ENCODE measurements at regions of chr6 and their contacts with region 1.

Region 1: DNA sequence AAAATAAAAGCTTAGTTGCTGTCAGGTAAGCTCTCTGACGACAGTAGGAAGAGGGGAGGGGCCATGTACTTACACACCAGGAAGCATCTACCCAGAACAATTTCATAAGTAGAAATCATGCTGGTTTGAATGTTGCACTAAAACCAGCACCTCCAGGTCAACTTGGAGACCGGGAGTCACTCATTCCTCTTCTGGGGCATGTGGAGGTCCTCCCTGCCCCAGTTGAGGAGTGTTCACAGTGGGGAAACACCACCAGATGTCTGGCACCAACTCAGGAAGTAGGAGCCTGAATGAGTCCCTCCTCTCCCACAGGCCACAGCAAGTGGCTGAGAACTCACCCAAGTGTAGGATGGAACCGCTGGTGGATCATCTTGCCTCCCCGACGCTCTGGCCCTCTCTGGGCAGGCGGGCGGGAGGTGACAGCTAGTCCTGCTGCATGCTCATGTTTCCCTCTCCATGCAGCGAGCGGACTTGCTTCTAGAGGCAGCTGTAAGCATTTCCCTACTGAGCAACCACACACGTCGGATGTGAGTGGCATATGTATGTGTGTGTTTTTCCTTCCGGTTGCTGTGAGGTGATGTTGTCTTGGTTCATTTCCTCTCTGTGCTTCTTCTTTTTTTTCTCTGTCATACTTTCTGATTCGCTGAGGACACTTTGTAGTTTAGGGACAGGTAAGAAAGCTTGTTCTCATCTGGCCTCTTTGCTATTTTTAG is 149.5 kb upstream of the NEDD9 start:
- DNase-seq: peak; percentile 82
- H3K4me3 Mint-ChIP-seq: peak overlapping the region; percentile 94
- H3K27ac Mint-ChIP-seq: peak overlapping the region; percentile 92
- H3K4me1 Mint-ChIP-seq: peaks cover 67% of the 10 kb centered on the region
- H3K27me3 Mint-ChIP-seq: no peaks in the 10 kb centered on the region

Region 2: DNA sequence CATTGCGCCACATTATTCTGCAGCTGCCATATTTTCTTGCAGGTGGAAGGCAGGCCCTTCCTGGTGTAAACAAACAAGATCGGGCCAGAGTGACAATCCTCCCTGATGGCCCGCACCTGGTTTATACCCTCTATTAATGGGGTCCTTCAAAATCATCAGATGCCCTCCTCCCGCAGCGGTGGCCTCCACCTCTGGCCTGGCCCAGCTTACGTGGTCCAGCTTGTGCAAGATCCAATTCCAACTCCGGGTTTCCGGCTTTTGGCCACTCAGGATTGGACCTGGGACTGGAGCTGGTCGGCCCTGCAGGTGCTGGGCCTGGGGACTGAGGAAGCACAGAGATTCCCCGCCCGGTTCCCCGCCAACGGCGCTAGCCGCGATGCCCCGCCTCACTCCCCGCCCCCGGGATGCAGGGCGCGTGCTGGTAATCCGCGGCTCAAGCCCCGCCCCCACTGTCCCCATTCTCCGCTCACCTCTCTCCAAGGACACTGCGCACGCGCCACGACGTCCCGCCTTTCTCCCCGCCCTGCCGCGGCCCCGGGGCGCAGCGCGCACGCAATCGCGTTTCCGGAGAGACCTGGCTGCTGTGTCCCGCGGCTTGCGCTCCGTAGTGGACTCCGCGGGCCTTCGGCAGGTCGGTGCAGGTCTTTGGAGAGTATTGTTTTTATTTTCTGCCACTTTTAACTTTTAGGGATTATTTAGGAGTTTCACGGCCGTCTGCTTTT is 634.5 kb before region 1 on chr6 and contains the start of gene TMEM14B:
- CTCF ChIA-PET with region 1: no interaction called
- POLR2A ChIA-PET with region 1: no interaction called
- DNase-seq: peak; percentile 100
- H3K4me3 Mint-ChIP-seq: peak within 1 kb of the TSS; percentile 93
- H3K27ac Mint-ChIP-seq: peak within 1 kb of the TSS; percentile 90
- H3K4me1 Mint-ChIP-seq: peaks cover 50% of the 10 kb centered on the region
- H3K27me3 Mint-ChIP-seq: no peaks in the 10 kb centered on the region
- total RNA-seq, gene TMEM14B: 81.5 to 83.6 TPM

Region 3: DNA sequence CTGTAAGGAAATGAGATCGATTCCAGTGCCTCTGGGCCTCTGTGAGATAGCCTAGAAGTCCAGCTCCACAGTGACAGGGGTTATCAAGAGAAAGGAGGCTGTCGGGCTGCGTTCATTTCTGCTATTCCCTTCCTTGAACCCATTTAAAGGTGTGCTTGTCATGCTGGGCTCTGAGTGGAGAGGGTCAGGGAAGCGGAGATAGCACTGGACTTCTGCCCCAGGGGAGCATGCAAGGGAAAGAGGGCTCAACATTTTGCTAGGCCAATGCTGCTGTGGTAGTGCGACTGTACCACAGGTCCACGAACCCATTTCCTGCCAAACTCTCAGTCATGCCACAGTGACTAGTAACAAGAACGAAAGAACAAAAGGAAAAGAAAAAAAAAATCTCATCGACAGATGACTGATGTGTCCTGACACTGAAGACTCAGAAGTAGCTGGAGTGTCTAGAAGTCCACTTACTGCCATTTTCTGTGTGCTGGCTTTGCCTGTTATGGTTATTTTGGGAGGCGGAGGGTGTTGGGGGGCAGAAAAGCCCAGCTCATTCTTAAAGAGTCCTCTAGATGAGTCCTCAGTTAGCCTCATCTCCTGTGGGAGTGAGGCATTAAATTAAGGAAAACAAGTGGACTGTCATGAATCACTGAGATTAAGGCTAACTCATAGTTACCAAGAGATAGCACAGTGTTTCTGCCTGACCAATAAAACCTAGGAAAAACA is 157.5 kb before region 1 on chr6:
- CTCF ChIA-PET with region 1: no interaction called
- POLR2A ChIA-PET with region 1: interaction called, 68 read pairs
- DNase-seq: peak; percentile 77
- H3K4me3 Mint-ChIP-seq: peak overlapping the region; percentile 55
- H3K27ac Mint-ChIP-seq: peak overlapping the region; percentile 92
- H3K4me1 Mint-ChIP-seq: peaks cover 80% of the 10 kb centered on the region
- H3K27me3 Mint-ChIP-seq: no peaks in the 10 kb centered on the region

Region 4: GRCh38 chr6:11263291-11263775 is 118.6 kb before region 1 on chr6:
- CTCF ChIA-PET with region 1: interaction called, 4 read pairs
- POLR2A ChIA-PET with region 1: interaction called, 16 read pairs
- DNase-seq: no peak
- H3K4me3 Mint-ChIP-seq: no peak overlapping the region
- H3K27ac Mint-ChIP-seq: no peak overlapping the region
- H3K4me1 Mint-ChIP-seq: peaks cover 41% of the 10 kb centered on the region
- H3K27me3 Mint-ChIP-seq: no peaks in the 10 kb centered on the region

Region 5: GRCh38 chr6:11323666-11324452 is 58.1 kb before region 1 on chr6:
- CTCF ChIA-PET with region 1: no interaction called
- POLR2A ChIA-PET with region 1: interaction called, 13 read pairs
- DNase-seq: no peak
- H3K4me3 Mint-ChIP-seq: no peak overlapping the region
- H3K27ac Mint-ChIP-seq: no peak overlapping the region
- H3K4me1 Mint-ChIP-seq: peaks cover 60% of the 10 kb centered on the region
- H3K27me3 Mint-ChIP-seq: no peaks in the 10 kb centered on the region

Region 6: GRCh38 chr6:11353921-11354389 is 28.0 kb before region 1 on chr6:
- CTCF ChIA-PET with region 1: interaction called, 3 read pairs
- POLR2A ChIA-PET with region 1: interaction called, 14 read pairs
- DNase-seq: peak; percentile 66
- H3K4me3 Mint-ChIP-seq: peak overlapping the region; percentile 2
- H3K27ac Mint-ChIP-seq: peak overlapping the region; percentile 83
- H3K4me1 Mint-ChIP-seq: peaks cover 68% of the 10 kb centered on the region
- H3K27me3 Mint-ChIP-seq: no peaks in the 10 kb centered on the region

Region 7: GRCh38 chr6:11414176-11414963 is 32.4 kb after region 1 on chr6:
- CTCF ChIA-PET with region 1: interaction called, 13 read pairs
- POLR2A ChIA-PET with region 1: interaction called, 101 read pairs
- DNase-seq: peak; percentile 76
- H3K4me3 Mint-ChIP-seq: peak overlapping the region; percentile 8
- H3K27ac Mint-ChIP-seq: peak overlapping the region; percentile 59
- H3K4me1 Mint-ChIP-seq: peaks cover 55% of the 10 kb centered on the region
- H3K27me3 Mint-ChIP-seq: no peaks in the 10 kb centered on the region

Region 8: GRCh38 chr6:11770546-11771466 is 388.8 kb after region 1 on chr6:
- CTCF ChIA-PET with region 1: no interaction called
- POLR2A ChIA-PET with region 1: no interaction called
- DNase-seq: no peak
- H3K4me3 Mint-ChIP-seq: no peak overlapping the region
- H3K27ac Mint-ChIP-seq: no peak overlapping the region
- H3K4me1 Mint-ChIP-seq: no peaks in the 10 kb centered on the region
- H3K27me3 Mint-ChIP-seq: peaks cover 4% of the 10 kb centered on the region